ENCODE measurements at regions of chr9 and their contacts with region 1.

Region 1: GRCh38 chr9:112333639-112334431 is 416 bp upstream of the PTBP3 start:
- DNase-seq: peak; percentile 88
- H3K4me3 Mint-ChIP-seq: peak overlapping the region; percentile 97
- H3K27ac Mint-ChIP-seq: peak overlapping the region; percentile 94
- H3K4me1 Mint-ChIP-seq: peaks cover 31% of the 10 kb centered on the region
- H3K27me3 Mint-ChIP-seq: peaks cover 2% of the 10 kb centered on the region

Region 2: GRCh38 chr9:111661150-111661801 is 672.6 kb before region 1 on chr9 and contains the start of gene GNG10:
- intact Hi-C with region 1: loop called (anchors 1 kb)
- DNase-seq: peak; percentile 66
- H3K4me3 Mint-ChIP-seq: peak within 1 kb of the TSS; percentile 89
- H3K27ac Mint-ChIP-seq: peak within 1 kb of the TSS; percentile 89
- H3K4me1 Mint-ChIP-seq: peaks cover 34% of the 10 kb centered on the region
- H3K27me3 Mint-ChIP-seq: no peaks in the 10 kb centered on the region
- total RNA-seq, gene GNG10: 30.7 and 35.4 TPM in 2 replicates

Region 3: DNA sequence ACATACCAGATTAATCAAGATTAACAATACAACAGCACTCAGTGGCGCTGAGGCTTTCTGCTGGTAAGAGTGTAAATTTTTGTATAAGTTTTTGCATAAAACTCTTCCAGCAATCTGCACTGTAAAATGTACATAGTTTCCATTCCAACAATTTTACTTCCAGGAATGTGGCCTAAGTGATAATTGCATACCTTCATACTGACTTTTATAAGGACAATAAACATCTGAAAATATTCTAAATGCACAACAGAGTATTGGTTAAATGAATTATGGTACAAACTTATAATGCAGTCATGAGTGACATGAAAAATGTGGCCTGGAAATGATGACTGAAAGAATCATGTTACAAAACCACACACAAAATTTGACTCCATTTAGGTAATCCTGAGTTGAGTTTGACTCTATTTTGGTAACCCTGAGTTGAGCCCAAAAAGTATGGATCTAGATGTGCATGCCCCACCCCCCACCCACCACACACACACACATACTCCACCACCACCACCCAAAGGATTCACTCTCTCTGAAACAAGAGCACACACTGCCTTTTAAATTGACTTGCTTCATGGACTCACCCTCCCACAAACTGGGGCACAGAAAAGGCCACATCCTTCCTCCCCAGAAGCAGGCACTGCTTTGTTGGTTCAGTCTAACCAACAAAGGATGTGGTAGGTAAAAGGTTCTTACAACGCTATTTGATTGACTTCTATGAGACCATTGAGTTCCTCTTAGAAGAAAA is 296.4 kb before region 1 on chr9:
- intact Hi-C with region 1: loop called (anchors 1 kb)
- DNase-seq: peak; percentile 74
- H3K4me3 Mint-ChIP-seq: peak overlapping the region; percentile 43
- H3K27ac Mint-ChIP-seq: peak overlapping the region; percentile 82
- H3K4me1 Mint-ChIP-seq: peaks cover 53% of the 10 kb centered on the region
- H3K27me3 Mint-ChIP-seq: peaks cover 16% of the 10 kb centered on the region

Region 4: GRCh38 chr9:112218908-112219307 is 114.9 kb before region 1 on chr9:
- intact Hi-C with region 1: loop called (anchors 1 kb)
- DNase-seq: peak; percentile 9
- H3K4me3 Mint-ChIP-seq: peak overlapping the region; percentile 19
- H3K27ac Mint-ChIP-seq: peak overlapping the region; percentile 70
- H3K4me1 Mint-ChIP-seq: peaks cover 26% of the 10 kb centered on the region
- H3K27me3 Mint-ChIP-seq: no peaks in the 10 kb centered on the region

Region 5: GRCh38 chr9:112322701-112323377 is 11.0 kb before region 1 on chr9:
- intact Hi-C with region 1: no loop called
- DNase-seq: no peak
- H3K4me3 Mint-ChIP-seq: no peak overlapping the region
- H3K27ac Mint-ChIP-seq: no peak overlapping the region
- H3K4me1 Mint-ChIP-seq: peaks cover 52% of the 10 kb centered on the region
- H3K27me3 Mint-ChIP-seq: peaks cover 1% of the 10 kb centered on the region

Region 6: DNA sequence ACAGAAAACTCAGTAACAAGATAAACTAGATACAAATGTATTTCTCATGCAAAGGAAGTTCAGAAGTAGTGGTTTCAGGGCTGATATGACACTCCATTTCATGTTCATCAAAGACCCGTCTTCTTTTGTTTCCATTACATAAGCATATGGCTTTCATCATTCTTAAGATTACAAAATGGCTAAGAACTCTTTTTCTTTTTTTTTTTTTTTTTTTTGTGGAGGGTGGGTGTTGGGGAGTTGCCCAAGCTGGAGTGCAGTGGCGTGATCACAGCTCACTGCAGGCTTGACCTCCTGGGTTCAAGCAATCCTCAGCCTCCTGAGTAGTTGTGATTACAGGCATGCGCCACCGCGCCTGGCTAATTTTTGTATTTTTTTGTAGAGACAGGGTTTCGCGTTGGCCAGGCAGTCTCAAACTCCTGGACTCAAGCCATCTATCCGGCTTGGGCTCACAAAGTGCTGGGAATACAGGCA is 21.6 kb after region 1 on chr9:
- intact Hi-C with region 1: loop called (anchors 1 kb)
- DNase-seq: no peak
- H3K4me3 Mint-ChIP-seq: peak overlapping the region; percentile 2
- H3K27ac Mint-ChIP-seq: peak overlapping the region; percentile 47
- H3K4me1 Mint-ChIP-seq: peaks cover 26% of the 10 kb centered on the region
- H3K27me3 Mint-ChIP-seq: peaks cover 10% of the 10 kb centered on the region

Region 7: DNA sequence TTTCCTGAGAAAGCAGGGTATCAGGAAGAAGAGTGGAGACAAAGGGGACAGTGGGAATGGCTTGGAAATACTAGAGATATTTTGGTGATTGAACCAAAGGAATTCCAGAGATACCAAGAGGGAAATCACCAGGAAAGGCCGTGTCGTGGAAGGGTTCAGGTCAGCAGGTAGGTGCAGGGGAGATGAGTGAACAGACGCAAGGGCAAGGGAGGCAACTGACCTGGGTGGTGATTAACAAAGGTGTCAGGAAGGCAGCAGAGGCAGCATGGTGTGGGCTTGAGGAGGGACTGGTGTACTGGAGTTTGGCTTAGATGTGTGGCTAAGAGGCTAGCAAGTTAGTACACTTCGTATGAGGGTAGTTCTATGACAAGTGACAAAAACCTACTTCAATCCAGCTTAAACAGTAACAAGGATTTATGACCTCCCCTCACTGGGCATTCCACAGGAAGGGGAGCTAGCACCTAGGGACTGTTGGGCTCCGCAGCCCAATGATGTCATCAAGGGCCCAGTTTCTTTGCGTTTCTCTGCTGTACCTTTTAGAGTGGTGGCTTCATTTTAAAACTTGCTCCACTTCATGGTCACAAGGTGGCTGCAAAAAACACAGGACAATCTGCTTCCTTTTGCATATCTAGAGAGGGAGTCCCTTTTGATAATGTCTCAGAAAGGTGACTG is 347.0 kb after region 1 on chr9:
- intact Hi-C with region 1: no loop called
- DNase-seq: no peak
- H3K4me3 Mint-ChIP-seq: no peak overlapping the region
- H3K27ac Mint-ChIP-seq: no peak overlapping the region
- H3K4me1 Mint-ChIP-seq: no peaks in the 10 kb centered on the region
- H3K27me3 Mint-ChIP-seq: no peaks in the 10 kb centered on the region

Region 8: GRCh38 chr9:112717661-112718341 is 384.0 kb after region 1 on chr9 and contains the start of gene INIP:
- intact Hi-C with region 1: loop called (anchors 1 kb)
- DNase-seq: peak; percentile 98
- H3K4me3 Mint-ChIP-seq: peak within 1 kb of the TSS; percentile 99
- H3K27ac Mint-ChIP-seq: peak within 1 kb of the TSS; percentile 100
- H3K4me1 Mint-ChIP-seq: peaks cover 35% of the 10 kb centered on the region
- H3K27me3 Mint-ChIP-seq: no peaks in the 10 kb centered on the region
- total RNA-seq, gene INIP: 38.3 and 46.4 TPM in 2 replicates

Measured in activated T-helper 1 cell treated with anti-CD3 and anti-CD28 coated beads, Interleukin-12 subunit alpha, Interleukin-12 subunit beta, Interleukin-2, Interleukin-4 antibody, amounts not matched to agents 30 ng/mL and 10 ng/mL and 1 ng/mL, durations not matched to agents 14 hours and 24 hours and 36 hours (primary cell).